Dorsolateral prefrontal cortex (tissue), 120 donors: ENCODE measurements at regions of chr1 and their contacts with region 1.

Region 1: DNA sequence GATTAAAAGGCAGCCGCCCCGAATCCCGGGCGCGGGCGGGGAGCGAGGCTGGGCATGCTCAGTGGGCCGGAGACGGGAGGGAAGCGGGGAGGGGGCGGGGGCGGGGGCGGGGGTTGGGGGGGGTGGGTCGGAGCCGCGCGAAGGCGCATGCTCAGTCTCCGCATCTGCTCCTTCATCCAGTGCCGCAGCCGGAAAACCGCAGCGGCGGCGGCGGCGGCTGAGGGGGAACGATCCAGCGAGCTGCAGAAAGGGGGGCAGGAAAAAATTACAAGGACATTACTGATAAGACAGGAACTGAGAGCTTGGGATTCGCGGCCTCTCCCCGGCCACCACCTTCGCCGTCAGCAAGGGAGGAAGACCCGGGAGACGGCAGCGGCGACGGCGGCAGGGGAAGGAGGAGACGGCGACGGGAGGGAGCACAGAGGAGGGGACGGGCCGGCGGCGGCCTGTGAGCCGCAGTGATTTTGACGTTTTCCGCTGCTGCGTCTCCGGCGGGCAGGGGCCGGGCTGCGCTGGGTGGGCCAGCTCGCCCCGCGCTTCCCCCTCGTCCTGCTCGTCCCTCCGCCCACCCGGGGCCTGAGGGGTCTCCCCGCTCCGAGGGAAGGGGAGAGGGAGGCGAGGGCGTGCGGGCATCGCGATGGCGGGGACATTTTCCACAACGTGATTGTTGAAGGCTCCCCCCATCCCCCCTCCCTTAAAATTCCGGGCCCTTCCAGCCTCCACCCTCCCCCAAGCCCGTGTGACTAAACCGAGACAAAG is at the start of gene CAMSAP2:
- DNase-seq: peak; percentile 76 to 94 (median 88)
- H3K4me3 ChIP-seq: peak within 1 kb of the TSS; percentile 64 to 97 (median 88)
- H3K27ac ChIP-seq: peak within 1 kb of the TSS; percentile 96 to 100 (median 100)
- H3K27me3 ChIP-seq: no peaks in the 10 kb centered on the region
- CTCF ChIP-seq: peak in 8 of 56 donors; percentile 6 to 26 (median 12)
- total RNA-seq, gene CAMSAP2: 69.0 to 139 (median 110) TPM

Region 2: DNA sequence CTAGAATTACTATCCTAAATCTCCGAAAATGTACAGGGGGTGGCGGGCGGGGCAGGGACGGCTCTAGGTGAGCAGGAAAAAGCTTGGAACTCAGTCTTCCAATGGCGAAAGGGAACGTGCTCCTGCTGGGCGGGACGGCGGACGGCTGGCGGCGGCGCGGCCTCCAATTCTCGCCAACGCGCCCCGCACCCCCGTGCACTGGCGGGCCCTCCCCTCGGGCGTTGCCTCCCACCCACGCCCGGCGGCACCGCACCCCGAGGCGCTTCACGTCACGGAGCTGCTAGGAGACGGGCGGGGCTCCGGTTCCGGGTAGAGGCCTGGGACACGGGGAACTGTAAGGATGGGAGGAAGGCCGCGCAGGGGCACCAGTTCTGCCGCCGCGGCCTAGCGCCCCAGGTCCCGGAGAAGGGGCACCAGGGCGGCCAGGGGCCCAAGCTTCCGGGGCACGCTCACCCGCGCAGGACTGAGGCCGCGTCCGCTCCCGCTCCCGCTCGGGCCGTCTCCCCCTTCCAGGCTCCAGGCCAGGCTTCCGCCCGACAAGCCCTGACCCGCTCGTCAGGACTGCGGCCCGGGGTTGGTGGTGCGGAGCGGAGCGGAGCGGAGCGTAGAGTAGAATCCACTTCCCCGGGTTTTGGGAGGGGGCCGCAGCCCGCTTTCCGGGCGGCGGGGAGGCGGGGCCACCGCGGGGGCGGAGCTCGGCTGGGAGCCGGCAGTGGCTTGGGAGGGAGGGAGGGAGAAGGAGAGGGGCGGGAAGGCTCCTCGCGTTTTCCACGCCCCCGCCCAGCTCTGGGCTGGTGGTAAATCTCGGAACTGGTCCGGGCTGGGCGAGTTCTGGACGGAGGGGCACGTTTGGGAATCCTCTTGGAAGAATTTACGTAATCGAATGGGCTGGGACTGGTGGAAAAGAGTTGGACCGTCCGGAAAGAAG is 69.3 kb before region 1 on chr1 and contains the start of gene DDX59:
- intact Hi-C with region 1: loop called (anchors 1 kb)
- DNase-seq: peak; percentile 82 to 97 (median 92)
- H3K4me3 ChIP-seq: peak within 1 kb of the TSS; percentile 58 to 97 (median 85)
- H3K27ac ChIP-seq: peak within 1 kb of the TSS; percentile 39 to 100 (median 99)
- H3K27me3 ChIP-seq: no peaks in the 10 kb centered on the region
- CTCF ChIP-seq: peak in 14 of 56 donors; percentile 8 to 41 (median 17)
- total RNA-seq, gene DDX59: 9.3 to 24.9 (median 15.1) TPM

Region 3: DNA sequence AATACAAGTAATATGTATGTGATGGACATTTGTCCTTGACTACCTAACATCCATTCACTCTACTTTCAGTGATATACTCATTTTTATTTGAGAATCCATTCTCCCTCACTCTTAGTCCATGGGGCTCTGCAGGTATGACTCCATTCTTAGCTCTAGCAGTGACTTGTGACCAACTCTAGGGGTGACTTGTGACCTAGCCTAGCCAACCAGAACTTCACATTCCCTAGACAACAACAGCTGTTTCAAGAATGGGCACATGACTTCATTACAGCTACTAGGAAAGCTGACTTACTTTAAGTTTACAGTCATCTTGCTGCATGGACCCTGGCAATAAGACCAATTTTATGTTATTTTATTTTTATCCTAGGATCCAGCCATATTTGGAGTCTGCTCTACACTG is 45.6 kb before region 1 on chr1:
- intact Hi-C with region 1: no loop called
- DNase-seq: no peak
- H3K4me3 ChIP-seq: no peak overlapping the region
- H3K27ac ChIP-seq: no peak overlapping the region
- H3K27me3 ChIP-seq: no peaks in the 10 kb centered on the region
- CTCF ChIP-seq: no peak

Region 4: DNA sequence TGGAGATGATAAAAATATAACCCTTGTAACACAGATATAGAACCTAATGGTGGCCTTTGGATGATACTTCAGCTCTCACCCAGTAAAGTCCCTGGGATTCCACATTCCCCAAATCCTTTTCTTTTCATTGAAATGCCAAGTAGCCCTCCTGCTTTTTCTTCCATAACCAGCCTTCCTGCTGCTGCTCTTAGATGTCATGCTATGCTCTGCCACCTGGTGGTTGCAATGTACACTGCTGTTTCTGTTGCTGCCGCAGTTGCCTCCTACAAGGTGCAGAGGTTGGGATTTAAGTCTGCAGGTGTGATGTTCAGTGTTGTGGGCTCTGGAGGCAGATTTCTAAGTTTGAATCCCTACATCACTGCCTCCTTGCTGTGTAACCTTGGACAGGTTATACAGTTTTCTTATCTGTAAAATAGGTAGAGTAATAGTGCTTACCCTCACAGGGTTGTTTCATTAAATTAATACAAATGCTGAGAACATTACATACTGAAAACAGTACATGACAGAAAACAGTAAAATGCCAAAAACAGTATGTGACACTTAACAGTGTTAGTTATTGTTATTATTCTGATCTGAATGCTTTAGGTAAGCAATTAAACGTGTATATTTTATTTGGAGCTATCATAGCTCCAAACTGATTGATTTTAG is 64.1 kb after region 1 on chr1:
- intact Hi-C with region 1: loop called (anchors 1 to 5 kb)
- DNase-seq: peak; percentile 55 to 88 (median 80)
- H3K4me3 ChIP-seq: peak overlapping the region in 3 of 59 donors; percentile 0 to 25 (median 11)
- H3K27ac ChIP-seq: peak overlapping the region in 1 of 59 donors; percentile 25
- H3K27me3 ChIP-seq: no peaks in the 10 kb centered on the region
- CTCF ChIP-seq: peak; percentile 89 to 99 (median 97)